Naive thymus-derived CD4-positive, alpha-beta T cell (primary cell): ENCODE measurements at regions of chr11 and their contacts with region 1.

Region 1: DNA sequence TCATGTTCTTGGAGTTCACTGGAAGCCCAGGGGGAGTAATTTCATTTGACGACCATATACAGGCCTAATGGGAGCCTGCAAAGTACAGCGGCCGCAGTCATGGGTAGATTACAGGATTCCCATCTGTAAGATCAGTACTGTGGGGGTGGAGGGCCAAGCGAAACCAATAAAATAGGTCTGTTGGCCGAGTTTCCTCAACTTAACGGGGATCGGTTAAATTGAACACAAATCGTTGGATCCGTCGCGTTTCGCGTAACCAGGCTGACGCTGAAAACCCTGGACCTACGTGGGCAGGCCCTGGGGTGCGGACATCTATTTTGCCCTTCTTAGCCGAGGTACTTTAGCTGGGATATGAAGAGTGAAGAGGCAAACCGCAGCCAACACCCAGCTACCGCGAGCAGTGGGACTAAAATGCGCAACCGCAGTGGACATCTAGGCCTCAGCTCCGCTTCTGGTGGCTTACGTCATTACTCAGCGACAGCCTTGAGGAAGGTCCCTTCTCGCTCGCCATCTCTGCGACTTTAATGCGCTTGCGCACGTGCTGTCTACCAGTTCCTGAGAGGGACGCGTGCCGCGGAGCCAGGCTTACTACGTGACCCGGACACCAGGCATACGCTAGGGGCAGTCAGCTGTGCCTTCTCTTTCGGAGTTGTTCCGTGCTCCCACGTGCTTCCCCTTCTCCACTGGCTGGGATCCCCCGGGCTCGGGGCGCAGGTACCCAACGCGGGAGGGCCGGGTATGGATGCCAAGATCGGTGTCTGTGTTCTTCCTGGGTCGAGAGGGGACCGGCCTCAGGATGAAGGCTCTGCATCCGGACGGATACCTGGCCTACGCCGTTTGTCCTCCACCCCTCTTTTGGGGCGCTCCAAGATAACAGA is at the start of gene NAT10:
- DNase-seq: peak; percentile 84 to 98 (median 96)
- ATAC-seq: peak; percentile 97
- H3K4me3 ChIP-seq: peak within 1 kb of the TSS; percentile 91
- H3K4me3 Mint-ChIP-seq: peak within 1 kb of the TSS; percentile 89 to 100 (median 97)
- H3K27ac ChIP-seq: peak within 1 kb of the TSS; percentile 83
- H3K27ac Mint-ChIP-seq: peak within 1 kb of the TSS; percentile 97 to 99 (median 99)
- H3K4me1 ChIP-seq: peaks cover 18 to 21% of the 10 kb centered on the region in 2 donors
- H3K4me1 Mint-ChIP-seq: peaks cover 26 to 76% (median 64%) of the 10 kb centered on the region in 7 donors
- H3K27me3 ChIP-seq: no peaks in the 10 kb centered on the region
- H3K27me3 Mint-ChIP-seq: peaks cover 0 to 5% (median 0%) of the 10 kb centered on the region in 5 donors
- total RNA-seq, gene NAT10: 55.7 to 104 (median 84.3) TPM

Region 2: DNA sequence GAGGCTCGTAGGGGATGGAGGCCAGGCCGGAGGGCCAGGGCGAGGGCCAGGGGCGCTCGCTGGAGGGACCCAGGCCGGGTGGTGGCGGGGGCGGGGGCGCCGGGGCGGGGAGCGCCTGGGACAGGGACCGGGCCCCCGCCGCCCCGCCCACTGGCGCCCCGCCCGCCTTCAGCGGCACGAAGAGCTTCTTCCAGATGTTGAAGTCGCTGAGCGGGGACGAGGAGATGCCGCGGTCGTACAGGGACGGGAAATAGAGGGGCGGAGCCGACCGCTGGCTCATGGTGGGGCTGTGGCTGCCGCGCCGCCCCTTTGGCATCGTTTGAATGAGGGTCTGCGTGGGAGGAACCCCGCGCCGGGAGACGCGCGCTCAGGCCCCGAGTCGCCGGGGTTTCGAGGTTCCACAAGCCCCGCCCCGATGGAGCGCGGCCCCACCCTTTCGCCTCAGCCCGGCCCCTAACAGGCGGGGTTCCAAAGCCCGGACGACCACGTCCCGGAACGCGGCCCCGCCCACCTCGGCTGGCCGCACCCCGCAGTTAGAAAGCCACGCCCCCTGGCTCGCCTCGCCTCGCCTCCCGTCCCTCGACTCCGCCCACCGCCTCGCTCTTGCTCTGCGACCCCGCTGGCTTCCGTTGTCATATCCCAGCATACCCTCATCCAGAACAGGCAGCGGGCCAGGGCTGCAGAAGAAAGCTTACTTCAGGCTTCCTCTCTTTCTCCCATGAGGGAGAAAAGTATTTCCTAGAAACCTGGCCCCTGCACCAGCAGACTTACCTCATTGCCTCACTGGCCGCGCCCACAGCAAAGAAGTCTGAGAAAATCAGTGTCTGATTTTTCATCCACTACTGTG is 404.7 kb before region 1 on chr11 and contains the start of gene C11orf91:
- CTCF ChIA-PET with region 1: no interaction called
- POLR2A ChIA-PET with region 1: no interaction called
- intact Hi-C with region 1: no loop called
- DNase-seq: peak; percentile 88 to 98 (median 95)
- ATAC-seq: peak; percentile 99
- H3K4me3 ChIP-seq: peak within 1 kb of the TSS; percentile 54
- H3K4me3 Mint-ChIP-seq: peak within 1 kb of the TSS; percentile 84 to 96 (median 92)
- H3K27ac ChIP-seq: no peak within 1 kb of the TSS
- H3K27ac Mint-ChIP-seq: peak within 1 kb of the TSS; percentile 61 to 84 (median 76)
- H3K4me1 ChIP-seq: peaks cover 9 to 13% of the 10 kb centered on the region in 2 donors
- H3K4me1 Mint-ChIP-seq: peaks cover 14 to 27% (median 23%) of the 10 kb centered on the region in 7 donors
- H3K27me3 ChIP-seq: no peaks in the 10 kb centered on the region
- H3K27me3 Mint-ChIP-seq: peaks cover 0 to 31% (median 5%) of the 10 kb centered on the region in 5 donors
- total RNA-seq, gene C11orf91: not detected

Region 3: DNA sequence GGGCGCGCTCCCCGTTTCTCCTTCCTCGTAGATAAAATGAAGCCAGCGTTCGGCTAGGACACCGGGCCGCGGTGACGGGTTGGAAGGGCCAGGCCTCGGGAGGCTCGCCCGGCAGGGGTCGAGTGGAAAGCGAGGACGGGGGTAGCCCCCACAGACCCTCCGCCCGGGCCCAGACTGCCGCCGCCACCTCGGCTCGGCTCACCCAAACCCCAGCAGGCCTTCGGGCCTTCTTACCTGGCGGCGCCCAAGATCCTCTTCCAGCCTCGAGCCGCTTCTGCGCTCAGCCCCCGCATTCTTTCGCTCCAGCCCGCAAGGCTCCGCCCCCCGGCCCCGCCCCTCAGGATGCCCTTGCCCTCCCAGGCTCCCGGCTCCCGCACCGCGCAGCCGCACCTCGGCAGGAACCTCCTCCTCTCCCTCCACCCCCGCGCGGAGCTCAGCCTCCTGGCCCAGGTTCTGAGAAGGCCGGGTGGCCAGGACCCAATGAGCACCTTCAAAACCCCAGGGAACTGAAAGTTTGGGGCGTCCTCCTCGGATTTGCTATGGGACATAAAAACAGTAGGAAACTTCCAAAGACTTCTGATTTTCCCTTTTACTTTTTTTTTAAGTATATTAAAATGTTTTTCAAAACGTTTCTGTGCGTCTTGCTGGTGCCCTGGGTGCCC is 369.0 kb before region 1 on chr11 and contains the start of gene CD59:
- CTCF ChIA-PET with region 1: no interaction called
- POLR2A ChIA-PET with region 1: interaction called, 3 read pairs
- intact Hi-C with region 1: loop called in 1 of 2 experiments (anchors 1 kb)
- DNase-seq: peak; percentile 75 to 94 (median 85)
- ATAC-seq: peak; percentile 92
- H3K4me3 ChIP-seq: peak within 1 kb of the TSS; percentile 76
- H3K4me3 Mint-ChIP-seq: peak within 1 kb of the TSS; percentile 87 to 97 (median 92)
- H3K27ac ChIP-seq: peak within 1 kb of the TSS; percentile 72
- H3K27ac Mint-ChIP-seq: peak within 1 kb of the TSS; percentile 79 to 94 (median 86)
- H3K4me1 ChIP-seq: peaks cover 9 to 17% of the 10 kb centered on the region in 2 donors
- H3K4me1 Mint-ChIP-seq: peaks cover 21 to 41% (median 36%) of the 10 kb centered on the region in 7 donors
- H3K27me3 ChIP-seq: no peaks in the 10 kb centered on the region
- H3K27me3 Mint-ChIP-seq: peaks cover 0 to 11% (median 0%) of the 10 kb centered on the region in 5 donors
- total RNA-seq, gene CD59: 23.3 to 152 (median 62.7) TPM

Region 4: GRCh38 chr11:33996498-33997454 is 108.5 kb before region 1 on chr11:
- CTCF ChIA-PET with region 1: interaction called, 5 read pairs
- POLR2A ChIA-PET with region 1: interaction called, 4 read pairs
- intact Hi-C with region 1: loop called (anchors 1 kb)
- DNase-seq: peak; percentile 42 to 79 (median 71)
- ATAC-seq: peak; percentile 99
- H3K4me3 ChIP-seq: no peak overlapping the region
- H3K4me3 Mint-ChIP-seq: peak overlapping the region in 7 of 10 donors; percentile 31 to 74 (median 59)
- H3K27ac ChIP-seq: no peak overlapping the region
- H3K27ac Mint-ChIP-seq: no peak overlapping the region
- H3K4me1 ChIP-seq: peaks cover 0 to 3% of the 10 kb centered on the region in 2 donors
- H3K4me1 Mint-ChIP-seq: peaks cover 0 to 10% (median 9%) of the 10 kb centered on the region in 7 donors
- H3K27me3 ChIP-seq: peaks cover 0 to 5% of the 10 kb centered on the region in 2 donors
- H3K27me3 Mint-ChIP-seq: peaks cover 12 to 33% (median 18%) of the 10 kb centered on the region in 5 donors

Region 5: GRCh38 chr11:34091825-34092224 is 13.5 kb before region 1 on chr11:
- CTCF ChIA-PET with region 1: no interaction called
- POLR2A ChIA-PET with region 1: interaction called, 17 read pairs
- intact Hi-C with region 1: loop called in 1 of 2 experiments (anchors 1 kb)
- DNase-seq: no peak
- ATAC-seq: no peak
- H3K4me3 ChIP-seq: no peak overlapping the region
- H3K4me3 Mint-ChIP-seq: no peak overlapping the region
- H3K27ac ChIP-seq: no peak overlapping the region
- H3K27ac Mint-ChIP-seq: peak overlapping the region in 1 of 9 donors; percentile 19
- H3K4me1 ChIP-seq: no peaks in the 10 kb centered on the region
- H3K4me1 Mint-ChIP-seq: peaks cover 0 to 12% (median 0%) of the 10 kb centered on the region in 7 donors
- H3K27me3 ChIP-seq: no peaks in the 10 kb centered on the region
- H3K27me3 Mint-ChIP-seq: no peaks in the 10 kb centered on the region

Region 6: DNA sequence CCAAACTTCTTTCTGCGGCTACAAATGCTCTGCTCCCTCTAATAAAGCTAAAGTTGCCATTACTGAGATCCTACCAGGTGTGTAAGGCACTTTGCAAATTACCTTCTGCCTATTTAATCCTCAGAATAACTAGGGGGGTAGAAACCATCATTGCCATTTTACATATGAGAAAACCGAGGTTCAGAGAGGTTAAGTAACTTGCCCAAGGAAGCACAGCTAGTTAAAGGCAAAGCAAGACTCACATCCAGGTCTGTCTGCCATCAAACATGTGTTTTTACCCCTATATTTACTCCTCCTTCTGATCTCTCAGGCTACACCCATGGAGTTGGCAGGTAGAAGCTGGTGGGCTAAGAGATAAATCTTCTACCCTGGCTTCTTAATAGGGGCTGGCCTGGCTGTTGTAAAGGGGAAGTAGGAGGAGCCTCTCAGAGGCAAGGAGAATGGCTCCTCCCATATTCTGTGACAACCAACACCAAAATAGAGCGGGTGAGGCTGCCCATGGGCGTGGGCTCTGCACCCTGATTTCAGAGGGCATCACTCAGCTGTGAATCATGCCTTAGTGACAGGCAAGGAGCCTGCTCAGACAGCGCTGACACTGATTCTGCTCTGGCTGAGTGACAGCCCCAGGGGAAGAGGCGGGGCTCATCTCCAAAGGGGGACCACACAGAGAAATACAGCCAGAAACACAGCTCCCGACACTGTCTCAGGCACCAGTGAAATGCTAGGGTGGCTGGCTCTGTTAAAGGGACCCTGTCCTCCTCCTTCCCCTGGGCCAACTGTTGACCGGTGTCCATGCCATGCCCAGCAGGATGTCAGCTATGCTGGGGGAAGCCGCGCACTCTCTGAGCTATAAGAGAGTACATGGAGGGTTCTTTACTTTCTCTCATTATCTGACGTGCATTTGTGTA is 145.7 kb after region 1 on chr11:
- CTCF ChIA-PET with region 1: no interaction called
- POLR2A ChIA-PET with region 1: no interaction called
- intact Hi-C with region 1: loop called (anchors 2 to 5 kb)
- DNase-seq: peak; percentile 24 to 79 (median 58)
- ATAC-seq: peak; percentile 94
- H3K4me3 ChIP-seq: peak overlapping the region; percentile 40
- H3K4me3 Mint-ChIP-seq: peak overlapping the region; percentile 35 to 85 (median 78)
- H3K27ac ChIP-seq: no peak overlapping the region
- H3K27ac Mint-ChIP-seq: peak overlapping the region; percentile 12 to 79 (median 55)
- H3K4me1 ChIP-seq: peaks cover 36 to 51% of the 10 kb centered on the region in 2 donors
- H3K4me1 Mint-ChIP-seq: peaks cover 36 to 67% (median 58%) of the 10 kb centered on the region in 7 donors
- H3K27me3 ChIP-seq: no peaks in the 10 kb centered on the region
- H3K27me3 Mint-ChIP-seq: peaks cover 0 to 20% (median 0%) of the 10 kb centered on the region in 5 donors

Region 7: DNA sequence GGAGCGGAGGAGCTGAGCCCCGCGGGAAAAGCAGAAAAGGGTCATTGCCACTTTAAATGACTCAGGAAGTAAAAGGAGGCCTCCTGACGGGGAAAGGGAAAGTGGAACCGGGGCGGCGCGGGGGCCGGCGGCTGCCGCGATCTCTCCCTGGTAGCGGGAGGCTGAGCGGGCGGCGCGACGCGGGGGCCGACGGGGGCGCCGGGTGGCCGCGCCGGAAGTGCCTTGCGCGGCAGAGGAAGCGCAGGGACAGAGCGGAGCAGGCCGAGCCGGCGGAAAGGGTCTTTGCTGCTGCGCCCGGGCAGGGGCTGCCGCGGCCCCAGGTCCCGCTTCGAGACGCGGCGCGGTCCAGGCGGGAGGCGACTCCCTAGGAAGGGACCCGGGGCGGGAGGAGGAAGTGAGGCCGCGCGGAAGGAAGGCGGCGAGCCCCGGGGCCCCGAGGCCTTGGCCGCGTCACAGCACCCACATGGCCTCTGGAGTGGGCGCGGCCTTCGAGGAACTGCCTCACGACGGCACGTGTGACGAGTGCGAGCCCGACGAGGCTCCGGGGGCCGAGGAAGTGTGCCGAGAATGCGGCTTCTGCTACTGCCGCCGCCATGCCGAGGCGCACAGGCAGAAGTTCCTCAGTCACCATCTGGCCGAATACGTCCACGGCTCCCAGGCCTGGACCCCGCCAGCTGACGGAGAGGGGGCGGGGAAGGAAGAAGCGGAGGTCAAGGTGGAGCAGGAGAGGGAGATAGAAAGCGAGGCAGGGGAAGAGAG is 1557.5 kb after region 1 on chr11 and contains the start of gene TRIM44:
- CTCF ChIA-PET with region 1: no interaction called
- POLR2A ChIA-PET with region 1: no interaction called
- intact Hi-C with region 1: loop called in 1 of 2 experiments (anchors 10 kb)
- DNase-seq: peak; percentile 69 to 85 (median 82)
- ATAC-seq: peak; percentile 89
- H3K4me3 ChIP-seq: peak within 1 kb of the TSS; percentile 94
- H3K4me3 Mint-ChIP-seq: peak within 1 kb of the TSS; percentile 91 to 99 (median 95)
- H3K27ac ChIP-seq: peak within 1 kb of the TSS; percentile 94
- H3K27ac Mint-ChIP-seq: peak within 1 kb of the TSS; percentile 90 to 100 (median 96)
- H3K4me1 ChIP-seq: peaks cover 21 to 22% of the 10 kb centered on the region in 2 donors
- H3K4me1 Mint-ChIP-seq: peaks cover 24 to 61% (median 55%) of the 10 kb centered on the region in 7 donors
- H3K27me3 ChIP-seq: no peaks in the 10 kb centered on the region
- H3K27me3 Mint-ChIP-seq: peaks cover 0 to 22% (median 5%) of the 10 kb centered on the region in 5 donors
- total RNA-seq, gene TRIM44: 35.7 to 60.8 (median 58.6) TPM